Activated naive CD4-positive, alpha-beta T cell treated with anti-CD3 and anti-CD28 coated beads for 36 hours (primary cell): ENCODE measurements at regions of chr2 and their contacts with region 1.

Region 1: GRCh38 chr2:136384531-136385303 is 266.8 kb upstream of the CXCR4 start:
- DNase-seq: peak; percentile 73
- H3K4me3 Mint-ChIP-seq: no peak overlapping the region
- H3K27ac Mint-ChIP-seq: no peak overlapping the region
- H3K4me1 Mint-ChIP-seq: peaks cover 41% of the 10 kb centered on the region
- H3K27me3 Mint-ChIP-seq: no peaks in the 10 kb centered on the region

Region 2: GRCh38 chr2:135052042-135052876 is 1332.5 kb before region 1 on chr2 and contains the start of gene RAB3GAP1:
- CTCF ChIA-PET with region 1: no interaction called
- intact Hi-C with region 1: loop called (anchors 1 kb)
- DNase-seq: peak; percentile 97
- H3K4me3 Mint-ChIP-seq: peak within 1 kb of the TSS; percentile 99
- H3K27ac Mint-ChIP-seq: peak within 1 kb of the TSS; percentile 100
- H3K4me1 Mint-ChIP-seq: peaks cover 40% of the 10 kb centered on the region
- H3K27me3 Mint-ChIP-seq: no peaks in the 10 kb centered on the region
- total RNA-seq, gene RAB3GAP1: 55.5 to 59.7 TPM

Region 3: GRCh38 chr2:135456431-135456830 is 928.3 kb before region 1 on chr2:
- CTCF ChIA-PET with region 1: no interaction called
- intact Hi-C with region 1: no loop called
- DNase-seq: no peak
- H3K4me3 Mint-ChIP-seq: no peak overlapping the region
- H3K27ac Mint-ChIP-seq: no peak overlapping the region
- H3K4me1 Mint-ChIP-seq: no peaks in the 10 kb centered on the region
- H3K27me3 Mint-ChIP-seq: no peaks in the 10 kb centered on the region

Region 4: DNA sequence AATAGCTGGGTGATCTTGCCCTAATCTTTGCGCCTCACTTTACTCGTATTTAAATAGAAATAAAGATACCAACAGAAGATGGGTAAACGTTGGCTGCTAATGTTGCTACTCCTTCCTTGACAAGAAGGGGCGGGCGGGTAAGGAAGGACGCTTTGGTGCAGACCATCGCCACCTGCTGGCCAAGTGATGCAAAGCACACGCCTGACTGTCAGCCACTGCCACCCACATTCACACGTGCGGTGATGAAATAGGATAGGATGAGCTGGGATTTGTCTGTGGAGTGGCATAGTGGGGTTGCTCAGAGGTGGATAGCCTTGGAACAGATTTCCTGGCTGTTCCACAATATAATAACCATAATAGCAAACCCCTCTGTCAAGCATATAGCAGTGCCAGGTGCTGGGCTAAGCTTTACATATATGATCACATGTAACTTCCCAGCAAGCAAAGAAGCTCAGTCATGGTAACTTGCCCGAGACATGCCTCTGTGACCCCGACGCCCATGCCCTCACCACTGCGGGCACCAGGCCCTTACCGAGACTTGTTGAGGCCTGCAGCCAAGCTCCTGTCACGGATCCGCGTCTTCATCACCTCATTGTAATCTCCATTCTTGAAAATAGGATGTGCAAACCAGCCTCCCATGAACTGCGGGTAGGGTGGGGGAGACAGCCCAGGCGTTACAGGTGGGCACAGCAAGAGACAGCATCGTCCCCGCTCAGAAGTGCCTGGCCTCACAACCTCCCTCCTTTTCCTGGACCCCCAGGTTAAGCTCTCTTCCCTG is 587.0 kb before region 1 on chr2:
- CTCF ChIA-PET with region 1: interaction called, 21 read pairs
- intact Hi-C with region 1: loop called (anchors 1 kb)
- DNase-seq: peak; percentile 91
- H3K4me3 Mint-ChIP-seq: no peak overlapping the region
- H3K27ac Mint-ChIP-seq: no peak overlapping the region
- H3K4me1 Mint-ChIP-seq: peaks cover 15% of the 10 kb centered on the region
- H3K27me3 Mint-ChIP-seq: no peaks in the 10 kb centered on the region

Region 5: DNA sequence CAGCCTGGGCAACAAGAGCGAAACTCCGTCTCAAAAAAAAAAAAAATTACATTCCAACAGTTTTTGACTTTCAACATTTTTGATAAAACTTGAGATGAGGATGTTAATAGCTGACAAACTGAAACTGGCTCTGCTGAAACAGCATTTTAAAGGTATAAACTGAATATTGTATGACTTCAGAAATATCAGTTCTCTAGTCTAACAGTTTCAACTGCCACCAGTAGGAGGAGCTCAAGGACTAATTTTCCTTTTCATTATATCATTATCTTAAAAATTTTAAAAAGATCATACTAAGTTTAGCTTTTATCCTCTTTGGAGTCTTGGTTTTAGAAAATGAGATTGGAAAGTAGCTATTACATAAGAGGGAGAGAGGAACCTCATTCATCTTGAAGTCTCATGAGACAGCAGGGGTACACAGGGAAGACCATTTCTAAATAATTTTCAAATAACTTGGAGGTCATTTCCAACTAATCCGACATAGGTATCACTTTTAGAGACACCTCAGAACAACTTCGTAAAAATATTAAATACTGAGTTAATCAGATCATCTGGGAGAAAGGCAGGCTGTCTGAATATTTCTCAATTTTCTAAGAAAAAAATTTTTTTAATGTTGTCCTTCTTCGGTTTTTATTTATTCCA is 470.9 kb before region 1 on chr2:
- CTCF ChIA-PET with region 1: interaction called, 71 read pairs
- intact Hi-C with region 1: loop called (anchors 1 kb)
- DNase-seq: peak; percentile 65
- H3K4me3 Mint-ChIP-seq: no peak overlapping the region
- H3K27ac Mint-ChIP-seq: no peak overlapping the region
- H3K4me1 Mint-ChIP-seq: peaks cover 10% of the 10 kb centered on the region
- H3K27me3 Mint-ChIP-seq: no peaks in the 10 kb centered on the region

Region 6: DNA sequence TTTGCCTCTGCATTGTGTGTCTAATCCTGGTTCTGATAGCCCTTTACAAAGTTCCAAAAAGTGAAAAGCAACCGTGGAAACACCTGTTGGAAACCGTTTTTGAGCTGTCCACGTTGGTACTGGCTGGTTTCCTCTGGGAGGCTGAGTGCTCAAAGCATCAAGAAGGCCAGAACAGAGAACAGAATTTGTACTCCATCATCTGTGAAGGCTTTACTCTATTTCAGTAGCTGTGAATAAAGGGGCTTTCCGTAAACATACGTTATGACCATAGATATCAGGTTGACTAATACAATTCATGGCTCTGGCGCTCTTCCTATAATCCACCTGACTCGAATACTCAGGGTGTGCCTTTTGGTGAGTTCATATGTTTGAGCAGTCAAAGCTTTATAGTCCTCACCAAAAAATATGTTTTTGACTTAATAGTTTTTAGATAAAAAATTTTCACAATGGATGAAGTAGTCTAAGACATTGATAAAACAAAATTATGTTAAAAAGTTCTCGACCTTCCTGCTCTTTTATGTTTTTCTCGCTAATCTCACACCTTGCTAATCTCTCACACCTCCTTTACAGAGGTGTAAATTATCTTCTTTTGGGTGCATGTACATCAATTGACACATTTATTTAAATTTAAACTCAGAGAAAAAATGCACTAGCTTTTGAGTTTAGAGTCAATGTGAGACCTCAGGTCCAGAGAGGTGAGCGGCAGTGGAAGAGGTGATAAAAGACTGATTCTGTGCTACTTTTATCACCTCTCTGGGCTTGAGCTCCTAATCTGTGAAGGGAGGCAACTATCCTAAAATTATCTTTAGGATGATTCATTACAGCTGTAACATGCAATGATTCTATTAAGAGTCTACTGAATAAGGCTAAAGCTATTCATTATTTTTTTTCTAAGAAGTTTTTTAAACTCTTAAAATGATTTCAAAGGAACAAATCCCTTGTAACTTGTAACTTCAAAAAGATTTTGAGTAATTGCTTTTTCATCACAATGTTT is 332.1 kb before region 1 on chr2:
- CTCF ChIA-PET with region 1: interaction called, 5 read pairs
- intact Hi-C with region 1: loop called (anchors 1 kb)
- DNase-seq: peak; percentile 53
- H3K4me3 Mint-ChIP-seq: peak overlapping the region; percentile 53
- H3K27ac Mint-ChIP-seq: peak overlapping the region; percentile 96
- H3K4me1 Mint-ChIP-seq: peaks cover 88% of the 10 kb centered on the region
- H3K27me3 Mint-ChIP-seq: no peaks in the 10 kb centered on the region

Region 7: GRCh38 chr2:136212423-136213378 is 172.0 kb before region 1 on chr2:
- CTCF ChIA-PET with region 1: interaction called, 5 read pairs
- intact Hi-C with region 1: loop called (anchors 1 kb)
- DNase-seq: peak; percentile 67
- H3K4me3 Mint-ChIP-seq: no peak overlapping the region
- H3K27ac Mint-ChIP-seq: peak overlapping the region; percentile 3
- H3K4me1 Mint-ChIP-seq: peaks cover 43% of the 10 kb centered on the region
- H3K27me3 Mint-ChIP-seq: no peaks in the 10 kb centered on the region

Region 8: GRCh38 chr2:136362676-136363390 is 21.9 kb before region 1 on chr2:
- CTCF ChIA-PET with region 1: interaction called, 9 read pairs
- intact Hi-C with region 1: loop called (anchors 1 kb)
- DNase-seq: peak; percentile 68
- H3K4me3 Mint-ChIP-seq: no peak overlapping the region
- H3K27ac Mint-ChIP-seq: peak overlapping the region; percentile 42
- H3K4me1 Mint-ChIP-seq: peaks cover 51% of the 10 kb centered on the region
- H3K27me3 Mint-ChIP-seq: peaks cover 4% of the 10 kb centered on the region

Region 9: DNA sequence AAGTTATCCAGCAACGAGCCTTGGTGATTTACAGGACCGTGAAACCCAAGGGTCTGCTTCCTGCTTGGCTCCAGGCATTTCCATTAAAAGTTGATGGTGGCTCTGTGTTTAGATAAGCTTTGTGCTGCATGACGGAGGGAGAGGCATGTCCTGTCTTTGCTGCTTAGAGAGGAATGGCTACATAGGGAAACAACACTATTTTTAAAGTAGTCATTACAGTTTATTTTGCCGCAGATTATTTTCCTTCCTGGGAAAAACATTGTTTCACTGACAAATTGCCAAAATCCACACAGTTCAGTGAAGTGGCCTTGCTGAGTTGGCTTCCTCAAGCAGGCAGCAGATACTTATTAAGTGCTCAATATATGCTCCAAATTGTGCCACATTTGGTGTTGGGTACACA is 479.2 kb after region 1 on chr2:
- CTCF ChIA-PET with region 1: no interaction called
- intact Hi-C with region 1: no loop called
- DNase-seq: no peak
- H3K4me3 Mint-ChIP-seq: no peak overlapping the region
- H3K27ac Mint-ChIP-seq: no peak overlapping the region
- H3K4me1 Mint-ChIP-seq: no peaks in the 10 kb centered on the region
- H3K27me3 Mint-ChIP-seq: no peaks in the 10 kb centered on the region